Adrenal gland (tissue), 19 donors: ENCODE measurements at regions of chr14 and their contacts with region 1.

Region 1: DNA sequence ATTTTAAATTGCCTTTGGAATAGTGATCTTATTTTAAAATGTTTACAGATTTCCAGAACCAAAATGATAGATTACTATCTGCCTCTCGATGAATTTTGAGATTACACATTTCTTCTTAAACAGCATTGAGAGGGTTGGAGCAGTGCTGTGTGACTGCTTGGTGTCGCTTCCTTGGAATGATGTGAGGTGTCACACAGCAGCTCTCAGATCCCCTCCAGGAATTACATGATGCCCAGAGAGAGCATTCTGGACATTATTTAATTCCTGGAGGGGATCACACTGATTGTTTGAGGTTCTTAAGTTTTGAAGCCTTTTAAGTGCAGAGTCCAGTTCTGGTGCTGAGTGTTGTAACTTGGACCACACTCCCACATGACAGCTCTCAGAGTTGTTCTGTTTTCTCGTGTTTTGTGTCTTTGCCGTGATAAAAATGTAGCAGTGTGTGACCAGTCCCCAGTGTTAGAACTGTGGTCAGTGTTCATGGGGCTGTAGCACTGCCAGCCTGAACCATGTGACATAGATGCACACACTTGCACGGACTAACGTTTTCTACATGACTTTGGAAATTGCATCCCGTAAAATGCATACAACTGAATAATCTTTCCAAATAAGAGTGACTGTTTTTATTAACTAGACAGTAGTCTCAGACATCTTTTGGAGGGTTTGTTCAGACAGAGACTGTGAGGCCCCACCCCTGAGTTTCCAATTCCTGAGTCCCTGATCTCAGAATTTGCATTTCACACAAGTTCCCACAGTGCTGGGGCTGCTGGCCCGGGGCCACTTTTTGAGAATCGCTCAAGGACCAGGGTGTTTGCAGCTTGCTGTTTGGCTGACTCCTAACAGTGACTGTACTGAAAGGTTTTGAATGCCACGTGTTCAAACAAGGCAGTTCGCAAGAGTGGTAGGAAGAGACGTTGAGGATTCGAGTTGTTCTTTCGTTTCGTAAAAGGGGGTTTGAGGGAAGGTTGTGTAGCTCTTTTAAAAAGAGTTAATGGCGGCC is 26.0 kb downstream of the XRCC3 start:
- DNase-seq: peak in 6 of 7 donors; percentile 69 to 83 (median 82)
- H3K4me3 ChIP-seq: no peak overlapping the region
- H3K27ac ChIP-seq: peak overlapping the region in 2 of 5 donors; percentile 41 to 43
- H3K4me1 ChIP-seq: peaks cover 15 to 25% of the 10 kb centered on the region in 2 donors
- H3K27me3 ChIP-seq: no peaks in the 10 kb centered on the region
- CTCF ChIP-seq: no peak
- POLR2A ChIP-seq: no peak

Region 2: GRCh38 chr14:103542605-103543088 is 146.6 kb before region 1 on chr14:
- intact Hi-C with region 1: no loop called
- DNase-seq: peak in 3 of 7 donors; percentile 62 to 79 (median 76)
- H3K4me3 ChIP-seq: no peak overlapping the region
- H3K27ac ChIP-seq: peak overlapping the region in 1 of 5 donors; percentile 49
- H3K4me1 ChIP-seq: peaks cover 34 to 47% of the 10 kb centered on the region in 2 donors
- H3K27me3 ChIP-seq: no peaks in the 10 kb centered on the region
- CTCF ChIP-seq: no peak
- POLR2A ChIP-seq: no peak

Region 3: DNA sequence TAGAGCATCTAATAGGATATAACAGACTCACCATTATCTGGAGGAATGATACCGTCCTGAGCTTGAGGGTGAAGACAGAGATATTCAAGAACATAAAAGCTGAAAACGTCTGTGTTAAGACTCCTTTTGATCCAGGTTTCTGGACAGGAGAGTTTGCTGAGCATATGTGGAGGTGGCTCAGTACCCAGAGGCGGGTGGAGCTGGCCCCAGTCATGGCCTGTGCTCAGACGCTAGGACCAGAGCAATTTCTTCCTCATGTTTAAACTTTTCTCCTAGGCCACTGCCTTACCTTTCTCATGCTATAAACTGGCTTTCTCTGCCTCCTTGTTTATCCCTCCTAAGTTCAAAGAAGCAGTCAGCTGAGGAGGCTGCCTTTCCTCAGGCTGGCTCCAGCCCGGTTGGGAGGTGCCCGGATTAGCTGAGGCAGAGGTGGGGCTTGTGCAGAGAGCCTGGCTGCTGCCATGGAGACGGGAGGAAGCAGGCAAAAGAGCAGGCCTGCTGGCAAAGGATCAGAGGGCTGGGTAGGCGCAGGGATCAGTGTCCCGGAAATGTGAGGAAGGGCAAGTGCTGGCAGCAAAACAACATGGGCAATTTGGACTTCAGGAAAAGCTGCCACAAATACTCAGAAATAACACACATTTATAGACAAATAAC is 112.7 kb before region 1 on chr14:
- intact Hi-C with region 1: loop called in 1 of 2 experiments (anchors 10 kb)
- DNase-seq: peak; percentile 84 to 97 (median 94)
- H3K4me3 ChIP-seq: no peak overlapping the region
- H3K27ac ChIP-seq: peak overlapping the region in 2 of 5 donors; percentile 70 to 71
- H3K4me1 ChIP-seq: peaks cover 6 to 16% of the 10 kb centered on the region in 2 donors
- H3K27me3 ChIP-seq: no peaks in the 10 kb centered on the region
- CTCF ChIP-seq: no peak
- POLR2A ChIP-seq: no peak

Region 4: GRCh38 chr14:103801459-103801858 is 112.3 kb after region 1 on chr14:
- intact Hi-C with region 1: no loop called
- DNase-seq: no peak
- H3K4me3 ChIP-seq: no peak overlapping the region
- H3K27ac ChIP-seq: no peak overlapping the region
- H3K4me1 ChIP-seq: peaks cover 0 to 7% of the 10 kb centered on the region in 2 donors
- H3K27me3 ChIP-seq: no peaks in the 10 kb centered on the region
- CTCF ChIP-seq: no peak
- POLR2A ChIP-seq: no peak

Region 5: GRCh38 chr14:103973354-103973753 is 284.1 kb after region 1 on chr14:
- intact Hi-C with region 1: no loop called
- DNase-seq: peak in 6 of 7 donors; percentile 16 to 58 (median 26)
- H3K4me3 ChIP-seq: no peak overlapping the region
- H3K27ac ChIP-seq: no peak overlapping the region
- H3K4me1 ChIP-seq: no peaks in the 10 kb centered on the region
- H3K27me3 ChIP-seq: no peaks in the 10 kb centered on the region
- CTCF ChIP-seq: no peak
- POLR2A ChIP-seq: no peak